ENCODE measurements at regions of chr13 and their contacts with region 1.

Region 1: DNA sequence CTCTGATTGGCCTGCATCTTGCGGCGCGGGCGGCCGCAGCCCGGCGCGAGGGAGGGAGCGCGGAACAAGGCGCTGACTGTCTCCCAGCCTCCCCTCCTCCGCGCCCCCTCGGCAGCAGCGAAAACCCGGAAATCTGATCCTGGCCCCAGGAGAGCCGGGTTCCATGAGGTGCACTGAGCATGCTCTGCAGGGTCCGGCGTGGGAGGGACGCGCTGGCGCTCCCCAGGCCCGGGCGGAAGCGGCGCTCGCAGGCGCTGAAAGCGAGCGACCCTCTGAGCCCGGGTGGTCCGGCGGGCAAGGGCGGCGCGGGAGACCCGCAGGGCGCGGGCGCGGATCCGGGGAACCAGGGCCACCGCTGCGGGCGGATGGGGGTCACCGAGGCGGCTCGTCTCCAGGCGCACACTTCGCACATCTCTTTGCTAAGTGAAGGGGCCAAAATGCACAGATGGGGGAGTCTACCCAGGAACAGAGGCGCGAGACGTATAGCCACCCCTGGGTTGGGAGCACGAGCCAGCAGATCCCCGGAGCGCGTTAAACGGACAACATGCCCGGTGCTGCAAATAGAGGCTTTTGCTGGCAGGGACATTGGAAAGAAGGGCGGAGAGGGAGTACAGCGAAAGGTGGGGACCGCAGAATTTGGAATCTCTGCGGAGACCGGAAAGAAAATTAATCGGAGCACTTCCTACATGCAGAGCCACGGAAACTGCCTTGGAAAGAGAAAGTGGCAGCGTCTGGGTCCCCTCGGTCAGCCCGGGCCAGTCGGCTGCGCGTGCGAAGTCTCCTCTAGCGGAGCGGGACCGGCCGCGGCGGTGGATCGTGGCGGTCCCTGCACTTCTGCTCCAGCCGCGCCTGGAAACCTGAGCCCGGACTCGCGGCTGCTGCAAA is 510 bp upstream of the PCDH9 start:
- DNase-seq: peak; percentile 99
- H3K4me3 ChIP-seq: peak overlapping the region; percentile 58 to 98 (median 83)
- H3K27ac ChIP-seq: peak overlapping the region; percentile 85
- H3K4me1 ChIP-seq: peaks cover 14% of the 10 kb centered on the region
- H3K27me3 ChIP-seq: no peaks in the 10 kb centered on the region
- CTCF ChIP-seq: no peak
- POLR2A ChIP-seq: no peak

Region 2: GRCh38 chr13:65913173-65913572 is 1317.5 kb before region 1 on chr13:
- CTCF ChIA-PET with region 1: no interaction called
- POLR2A ChIA-PET with region 1: no interaction called
- dilution Hi-C with region 1: no loop called
- intact Hi-C with region 1: loop called (anchors 2 kb)
- DNase-seq: peak; percentile 94
- H3K4me3 ChIP-seq: peak overlapping the region in 1 of 3 experiments; percentile 31
- H3K27ac ChIP-seq: peak overlapping the region; percentile 99
- H3K4me1 ChIP-seq: peaks cover 38% of the 10 kb centered on the region
- H3K27me3 ChIP-seq: no peaks in the 10 kb centered on the region
- CTCF ChIP-seq: no peak
- POLR2A ChIP-seq: peak; percentile 54

Region 3: GRCh38 chr13:66492479-66492878 is 738.2 kb before region 1 on chr13:
- CTCF ChIA-PET with region 1: no interaction called
- POLR2A ChIA-PET with region 1: no interaction called
- dilution Hi-C with region 1: no loop called
- intact Hi-C with region 1: loop called (anchors 5 kb)
- DNase-seq: peak; percentile 3
- H3K4me3 ChIP-seq: no peak overlapping the region
- H3K27ac ChIP-seq: no peak overlapping the region
- H3K4me1 ChIP-seq: no peaks in the 10 kb centered on the region
- H3K27me3 ChIP-seq: no peaks in the 10 kb centered on the region
- CTCF ChIP-seq: no peak
- POLR2A ChIP-seq: no peak

Region 4: GRCh38 chr13:66635526-66635925 is 595.1 kb before region 1 on chr13:
- CTCF ChIA-PET with region 1: no interaction called
- POLR2A ChIA-PET with region 1: no interaction called
- dilution Hi-C with region 1: no loop called
- intact Hi-C with region 1: loop called (anchors 5 kb)
- DNase-seq: peak; percentile 89
- H3K4me3 ChIP-seq: no peak overlapping the region
- H3K27ac ChIP-seq: peak overlapping the region; percentile 70
- H3K4me1 ChIP-seq: peaks cover 18% of the 10 kb centered on the region
- H3K27me3 ChIP-seq: no peaks in the 10 kb centered on the region
- CTCF ChIP-seq: no peak
- POLR2A ChIP-seq: no peak

Region 5: DNA sequence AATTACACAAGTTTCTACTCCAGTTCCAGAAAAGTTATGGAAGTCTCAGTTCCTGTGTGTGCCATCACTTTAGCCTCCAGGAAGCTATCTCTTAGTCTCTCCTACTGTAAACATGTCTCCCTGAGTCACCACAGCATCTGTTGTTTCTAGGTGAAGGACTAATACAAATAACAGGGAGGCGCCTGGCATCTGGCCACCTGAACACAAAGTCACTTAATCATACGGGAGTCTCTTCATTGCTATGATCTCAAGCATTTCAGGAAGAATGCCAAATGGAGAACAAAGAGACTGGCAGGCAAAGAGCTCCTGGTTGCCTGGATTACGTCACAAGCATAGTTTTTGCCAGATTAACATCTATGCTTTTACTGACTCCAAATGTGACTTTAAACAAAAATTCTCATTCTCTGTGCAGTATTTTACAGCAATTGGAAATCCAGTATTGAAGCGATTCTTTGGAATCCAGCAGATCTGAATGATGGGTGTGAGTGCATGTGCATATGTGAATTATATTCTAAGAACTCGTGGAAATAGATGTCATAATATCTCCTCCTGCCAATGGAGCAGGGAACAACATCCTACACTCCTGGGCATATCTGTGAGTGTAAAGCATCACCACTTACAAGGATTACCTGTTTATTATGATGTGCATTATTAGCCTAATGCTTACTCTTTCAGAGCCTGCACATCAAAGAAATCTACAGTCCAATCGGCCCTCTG is 573.3 kb before region 1 on chr13:
- CTCF ChIA-PET with region 1: no interaction called
- POLR2A ChIA-PET with region 1: no interaction called
- dilution Hi-C with region 1: no loop called
- intact Hi-C with region 1: loop called (anchors 1 kb)
- DNase-seq: peak; percentile 97
- H3K4me3 ChIP-seq: no peak overlapping the region
- H3K27ac ChIP-seq: peak overlapping the region; percentile 92
- H3K4me1 ChIP-seq: peaks cover 32% of the 10 kb centered on the region
- H3K27me3 ChIP-seq: no peaks in the 10 kb centered on the region
- CTCF ChIP-seq: no peak
- POLR2A ChIP-seq: peak; percentile 31

Region 6: DNA sequence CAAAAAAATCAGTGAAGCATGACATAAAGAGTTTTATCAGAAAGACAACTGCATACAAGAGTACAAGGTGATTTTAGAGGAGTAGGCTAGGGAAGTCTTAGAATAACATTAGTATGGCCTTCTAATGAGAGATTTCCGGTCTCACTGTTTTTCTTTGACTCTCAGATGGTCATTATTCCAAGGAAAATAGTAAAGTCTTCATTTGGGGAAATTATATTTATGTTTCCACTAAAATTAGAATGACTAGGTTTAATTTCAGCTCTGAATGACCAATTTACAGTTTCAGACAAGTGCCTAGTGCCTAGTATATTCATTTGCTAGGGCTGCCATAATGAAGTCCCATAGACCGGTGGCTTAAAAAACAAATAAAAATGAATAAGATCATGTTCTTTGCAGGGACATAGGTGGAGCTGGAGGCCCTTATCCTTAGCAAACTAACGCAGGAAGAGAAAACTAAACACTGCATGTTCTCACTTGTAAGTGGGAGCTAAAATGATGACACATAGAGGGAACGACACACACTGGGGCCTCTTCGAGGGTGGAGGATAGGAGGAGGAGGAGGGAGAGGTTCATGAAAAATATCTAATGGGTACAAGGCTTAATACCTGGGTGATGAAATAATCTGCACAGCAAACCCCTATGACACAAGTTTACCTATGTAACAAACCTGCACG is 303.7 kb before region 1 on chr13:
- CTCF ChIA-PET with region 1: no interaction called
- POLR2A ChIA-PET with region 1: no interaction called
- dilution Hi-C with region 1: no loop called
- intact Hi-C with region 1: loop called (anchors 5 kb)
- DNase-seq: peak; percentile 66
- H3K4me3 ChIP-seq: no peak overlapping the region
- H3K27ac ChIP-seq: no peak overlapping the region
- H3K4me1 ChIP-seq: peaks cover 13% of the 10 kb centered on the region
- H3K27me3 ChIP-seq: no peaks in the 10 kb centered on the region
- CTCF ChIP-seq: no peak
- POLR2A ChIP-seq: no peak

Region 7: DNA sequence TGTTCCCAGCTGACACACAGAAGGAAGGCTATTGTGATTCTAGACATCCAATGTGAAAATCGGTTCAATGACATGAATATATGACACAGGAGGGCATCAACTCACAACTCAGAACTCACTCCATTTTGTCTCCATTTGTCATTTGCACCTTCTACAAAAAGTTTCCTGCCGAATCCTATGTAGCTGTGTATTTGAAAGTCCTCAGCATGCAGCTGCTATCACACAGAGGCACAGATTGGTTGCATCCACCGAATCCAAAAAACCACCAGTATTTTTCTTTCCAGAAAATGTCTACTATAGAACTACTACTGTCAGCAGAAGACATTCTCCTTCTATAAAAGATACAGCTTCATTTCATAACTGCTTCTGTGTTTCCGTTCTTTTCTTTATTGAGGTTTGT is 13.8 kb before region 1 on chr13:
- CTCF ChIA-PET with region 1: no interaction called
- POLR2A ChIA-PET with region 1: no interaction called
- dilution Hi-C with region 1: no loop called
- intact Hi-C with region 1: no loop called
- DNase-seq: no peak
- H3K4me3 ChIP-seq: no peak overlapping the region
- H3K27ac ChIP-seq: no peak overlapping the region
- H3K4me1 ChIP-seq: no peaks in the 10 kb centered on the region
- H3K27me3 ChIP-seq: no peaks in the 10 kb centered on the region
- CTCF ChIP-seq: no peak
- POLR2A ChIP-seq: no peak

Region 8: DNA sequence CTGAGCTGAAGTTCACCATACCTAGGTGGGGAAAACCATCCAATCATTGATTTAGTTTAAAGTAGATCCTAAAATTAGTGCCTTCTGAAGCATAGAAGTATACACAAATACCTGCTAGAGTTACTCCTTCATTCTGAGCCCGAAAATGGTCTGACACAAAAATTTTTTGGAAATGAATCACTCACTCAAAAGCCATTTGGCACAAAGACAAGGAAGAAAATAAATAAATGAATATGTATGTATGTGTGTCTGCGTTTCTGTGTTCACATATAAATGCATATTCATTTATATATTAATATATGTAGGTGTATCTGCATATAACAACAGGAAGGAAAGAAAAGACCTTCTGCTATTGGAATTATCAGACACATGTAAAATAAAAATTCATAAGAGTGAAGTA is 613.9 kb after region 1 on chr13:
- CTCF ChIA-PET with region 1: no interaction called
- POLR2A ChIA-PET with region 1: no interaction called
- dilution Hi-C with region 1: no loop called
- intact Hi-C with region 1: no loop called
- DNase-seq: no peak
- H3K4me3 ChIP-seq: no peak overlapping the region
- H3K27ac ChIP-seq: no peak overlapping the region
- H3K4me1 ChIP-seq: no peaks in the 10 kb centered on the region
- H3K27me3 ChIP-seq: no peaks in the 10 kb centered on the region
- CTCF ChIP-seq: no peak
- POLR2A ChIP-seq: no peak

Measured in endothelial cell of umbilical vein (primary cell).